Transverse colon (tissue), 4 donors: ENCODE measurements at regions of chr1 and their contacts with region 1.

Region 1: GRCh38 chr1:99406656-99407417 is 142.5 kb downstream of the PLPPR4 start:
- DNase-seq: no peak
- H3K4me3 ChIP-seq: no peak overlapping the region
- H3K27ac ChIP-seq: no peak overlapping the region
- H3K4me1 ChIP-seq: no peaks in the 10 kb centered on the region
- H3K27me3 ChIP-seq: no peaks in the 10 kb centered on the region
- CTCF ChIP-seq: no peak
- EP300 ChIP-seq: no peak
- POLR2A ChIP-seq: no peak

Region 2: GRCh38 chr1:99467645-99468044 is 60.8 kb after region 1 on chr1:
- in situ Hi-C with region 1: no loop called
- intact Hi-C with region 1: loop called (anchors 2 kb)
- DNase-seq: no peak
- H3K4me3 ChIP-seq: no peak overlapping the region
- H3K27ac ChIP-seq: no peak overlapping the region
- H3K4me1 ChIP-seq: no peaks in the 10 kb centered on the region
- H3K27me3 ChIP-seq: no peaks in the 10 kb centered on the region
- CTCF ChIP-seq: no peak
- EP300 ChIP-seq: no peak
- POLR2A ChIP-seq: no peak